Activated B cell treated with CpG ODN at 0.5 μM for 24 hours (primary cell): ENCODE measurements at regions of chr6 and their contacts with region 1.

Region 1: GRCh38 chr6:6547110-6547879 is 41.2 kb upstream of the LY86 start:
- DNase-seq: peak; percentile 75
- ATAC-seq: peak; percentile 93
- H3K4me3 Mint-ChIP-seq: peak overlapping the region; percentile 78
- H3K27ac Mint-ChIP-seq: no peak overlapping the region
- H3K4me1 Mint-ChIP-seq: peaks cover 11% of the 10 kb centered on the region
- H3K27me3 Mint-ChIP-seq: peaks cover 26% of the 10 kb centered on the region
- CTCF ChIP-seq: peak; percentile 98

Region 2: GRCh38 chr6:5143634-5144311 is 1403.5 kb before region 1 on chr6:
- CTCF ChIA-PET with region 1: interaction called, 8 read pairs
- POLR2A ChIA-PET with region 1: no interaction called
- intact Hi-C with region 1: loop called (anchors 1 kb)
- DNase-seq: peak; percentile 69
- ATAC-seq: peak; percentile 53
- H3K4me3 Mint-ChIP-seq: no peak overlapping the region
- H3K27ac Mint-ChIP-seq: peak overlapping the region; percentile 46
- H3K4me1 Mint-ChIP-seq: peaks cover 27% of the 10 kb centered on the region
- H3K27me3 Mint-ChIP-seq: no peaks in the 10 kb centered on the region
- CTCF ChIP-seq: peak; percentile 98

Region 3: DNA sequence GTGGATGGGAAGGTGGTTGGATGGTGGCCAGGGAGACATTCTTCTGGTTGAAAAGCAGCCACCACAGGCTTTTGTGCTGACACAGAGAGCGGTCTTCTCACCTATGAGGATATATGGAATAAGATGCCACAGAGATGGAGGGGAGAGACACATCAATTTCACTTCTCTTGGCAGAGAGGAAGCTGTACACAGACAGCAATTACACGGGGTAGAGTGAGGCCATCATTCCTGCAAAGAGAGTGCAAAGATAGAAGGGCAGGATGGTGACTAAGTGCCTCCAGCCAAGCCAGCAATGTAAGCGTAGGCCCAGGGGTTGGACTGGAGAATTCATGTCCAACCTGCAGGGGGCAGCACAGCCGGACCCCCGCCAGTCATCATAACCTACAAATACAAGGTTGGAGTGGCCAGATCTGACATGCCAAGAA is 596.9 kb before region 1 on chr6:
- CTCF ChIA-PET with region 1: no interaction called
- POLR2A ChIA-PET with region 1: no interaction called
- intact Hi-C with region 1: loop called (anchors 1 kb)
- DNase-seq: no peak
- ATAC-seq: no peak
- H3K4me3 Mint-ChIP-seq: no peak overlapping the region
- H3K27ac Mint-ChIP-seq: no peak overlapping the region
- H3K4me1 Mint-ChIP-seq: no peaks in the 10 kb centered on the region
- H3K27me3 Mint-ChIP-seq: peaks cover 19% of the 10 kb centered on the region
- CTCF ChIP-seq: no peak

Region 4: GRCh38 chr6:6057424-6058053 is 489.8 kb before region 1 on chr6:
- CTCF ChIA-PET with region 1: interaction called, 110 read pairs
- POLR2A ChIA-PET with region 1: interaction called, 7 read pairs
- intact Hi-C with region 1: loop called (anchors 1 kb)
- DNase-seq: no peak
- ATAC-seq: peak; percentile 66
- H3K4me3 Mint-ChIP-seq: no peak overlapping the region
- H3K27ac Mint-ChIP-seq: no peak overlapping the region
- H3K4me1 Mint-ChIP-seq: no peaks in the 10 kb centered on the region
- H3K27me3 Mint-ChIP-seq: peaks cover 37% of the 10 kb centered on the region
- CTCF ChIP-seq: peak; percentile 42

Region 5: GRCh38 chr6:6221787-6222535 is 325.3 kb before region 1 on chr6:
- CTCF ChIA-PET with region 1: interaction called, 17 read pairs
- POLR2A ChIA-PET with region 1: no interaction called
- intact Hi-C with region 1: loop called (anchors 1 kb)
- DNase-seq: no peak
- ATAC-seq: no peak
- H3K4me3 Mint-ChIP-seq: no peak overlapping the region
- H3K27ac Mint-ChIP-seq: no peak overlapping the region
- H3K4me1 Mint-ChIP-seq: no peaks in the 10 kb centered on the region
- H3K27me3 Mint-ChIP-seq: peaks cover 21% of the 10 kb centered on the region
- CTCF ChIP-seq: no peak

Region 6: DNA sequence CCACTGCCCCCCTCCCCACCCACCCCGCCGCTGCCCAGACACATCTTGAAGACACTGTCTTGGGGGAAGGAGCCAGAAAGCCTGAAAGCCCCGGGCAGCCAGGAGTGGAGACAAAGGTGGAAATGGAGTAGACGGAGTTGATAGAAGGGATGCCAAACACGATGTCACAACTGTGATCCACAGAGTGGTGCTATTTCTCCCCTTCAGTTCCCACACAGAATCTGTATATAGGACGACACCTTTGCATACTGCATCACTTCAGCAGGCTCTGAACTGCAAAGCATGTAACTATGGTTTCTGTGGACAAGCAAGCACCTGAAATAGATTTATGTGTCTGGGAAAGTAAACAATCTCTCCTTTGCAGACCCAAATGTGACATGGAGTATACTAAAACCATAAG is 170.4 kb before region 1 on chr6:
- CTCF ChIA-PET with region 1: interaction called, 4 read pairs
- POLR2A ChIA-PET with region 1: no interaction called
- intact Hi-C with region 1: loop called (anchors 1 kb)
- DNase-seq: no peak
- ATAC-seq: peak; percentile 34
- H3K4me3 Mint-ChIP-seq: no peak overlapping the region
- H3K27ac Mint-ChIP-seq: no peak overlapping the region
- H3K4me1 Mint-ChIP-seq: peaks cover 4% of the 10 kb centered on the region
- H3K27me3 Mint-ChIP-seq: no peaks in the 10 kb centered on the region
- CTCF ChIP-seq: no peak

Region 7: GRCh38 chr6:6494677-6495076 is 52.6 kb before region 1 on chr6:
- CTCF ChIA-PET with region 1: interaction called, 13 read pairs
- POLR2A ChIA-PET with region 1: no interaction called
- intact Hi-C with region 1: loop called (anchors 1 kb)
- DNase-seq: peak; percentile 34
- ATAC-seq: peak; percentile 49
- H3K4me3 Mint-ChIP-seq: no peak overlapping the region
- H3K27ac Mint-ChIP-seq: peak overlapping the region; percentile 53
- H3K4me1 Mint-ChIP-seq: no peaks in the 10 kb centered on the region
- H3K27me3 Mint-ChIP-seq: peaks cover 2% of the 10 kb centered on the region
- CTCF ChIP-seq: no peak